ENCODE measurements at regions of chr4 and their contacts with region 1.

Region 1: GRCh38 chr4:109559983-109560686 is at the start of gene MCUB:
- DNase-seq: peak; percentile 92
- H3K4me3 Mint-ChIP-seq: peak within 1 kb of the TSS; percentile 92
- H3K27ac Mint-ChIP-seq: peak within 1 kb of the TSS; percentile 97
- H3K4me1 Mint-ChIP-seq: peaks cover 53% of the 10 kb centered on the region
- H3K27me3 Mint-ChIP-seq: no peaks in the 10 kb centered on the region
- total RNA-seq, gene MCUB: 40.6 and 46.0 TPM in 2 replicates

Region 2: GRCh38 chr4:107719922-107720722 is 1840.0 kb before region 1 on chr4 and contains the start of gene PAPSS1:
- intact Hi-C with region 1: loop called (anchors 2 kb)
- DNase-seq: peak; percentile 93
- H3K4me3 Mint-ChIP-seq: peak within 1 kb of the TSS; percentile 94
- H3K27ac Mint-ChIP-seq: peak within 1 kb of the TSS; percentile 90
- H3K4me1 Mint-ChIP-seq: peaks cover 33% of the 10 kb centered on the region
- H3K27me3 Mint-ChIP-seq: no peaks in the 10 kb centered on the region
- total RNA-seq, gene PAPSS1: 35.0 and 36.0 TPM in 2 replicates

Region 3: GRCh38 chr4:108650212-108651013 is 909.7 kb before region 1 on chr4 and contains the start of gene OSTC:
- intact Hi-C with region 1: loop called (anchors 10 kb)
- DNase-seq: peak; percentile 90
- H3K4me3 Mint-ChIP-seq: peak within 1 kb of the TSS; percentile 99
- H3K27ac Mint-ChIP-seq: peak within 1 kb of the TSS; percentile 93
- H3K4me1 Mint-ChIP-seq: peaks cover 39% of the 10 kb centered on the region
- H3K27me3 Mint-ChIP-seq: no peaks in the 10 kb centered on the region
- total RNA-seq, gene OSTC: 96.1 and 96.7 TPM in 2 replicates

Region 4: GRCh38 chr4:109588176-109588575 is 28.0 kb after region 1 on chr4:
- intact Hi-C with region 1: loop called (anchors 1 kb)
- DNase-seq: peak; percentile 22
- H3K4me3 Mint-ChIP-seq: no peak overlapping the region
- H3K27ac Mint-ChIP-seq: peak overlapping the region; percentile 1
- H3K4me1 Mint-ChIP-seq: peaks cover 57% of the 10 kb centered on the region
- H3K27me3 Mint-ChIP-seq: no peaks in the 10 kb centered on the region

Region 5: GRCh38 chr4:109729718-109730618 is 169.8 kb after region 1 on chr4 and contains the start of gene PLA2G12A:
- intact Hi-C with region 1: loop called (anchors 1 kb)
- DNase-seq: peak; percentile 68
- H3K4me3 Mint-ChIP-seq: peak within 1 kb of the TSS; percentile 84
- H3K27ac Mint-ChIP-seq: peak within 1 kb of the TSS; percentile 62
- H3K4me1 Mint-ChIP-seq: peaks cover 19% of the 10 kb centered on the region
- H3K27me3 Mint-ChIP-seq: peaks cover 2% of the 10 kb centered on the region
- total RNA-seq, gene PLA2G12A: 11.3 and 13.1 TPM in 2 replicates

Region 6: DNA sequence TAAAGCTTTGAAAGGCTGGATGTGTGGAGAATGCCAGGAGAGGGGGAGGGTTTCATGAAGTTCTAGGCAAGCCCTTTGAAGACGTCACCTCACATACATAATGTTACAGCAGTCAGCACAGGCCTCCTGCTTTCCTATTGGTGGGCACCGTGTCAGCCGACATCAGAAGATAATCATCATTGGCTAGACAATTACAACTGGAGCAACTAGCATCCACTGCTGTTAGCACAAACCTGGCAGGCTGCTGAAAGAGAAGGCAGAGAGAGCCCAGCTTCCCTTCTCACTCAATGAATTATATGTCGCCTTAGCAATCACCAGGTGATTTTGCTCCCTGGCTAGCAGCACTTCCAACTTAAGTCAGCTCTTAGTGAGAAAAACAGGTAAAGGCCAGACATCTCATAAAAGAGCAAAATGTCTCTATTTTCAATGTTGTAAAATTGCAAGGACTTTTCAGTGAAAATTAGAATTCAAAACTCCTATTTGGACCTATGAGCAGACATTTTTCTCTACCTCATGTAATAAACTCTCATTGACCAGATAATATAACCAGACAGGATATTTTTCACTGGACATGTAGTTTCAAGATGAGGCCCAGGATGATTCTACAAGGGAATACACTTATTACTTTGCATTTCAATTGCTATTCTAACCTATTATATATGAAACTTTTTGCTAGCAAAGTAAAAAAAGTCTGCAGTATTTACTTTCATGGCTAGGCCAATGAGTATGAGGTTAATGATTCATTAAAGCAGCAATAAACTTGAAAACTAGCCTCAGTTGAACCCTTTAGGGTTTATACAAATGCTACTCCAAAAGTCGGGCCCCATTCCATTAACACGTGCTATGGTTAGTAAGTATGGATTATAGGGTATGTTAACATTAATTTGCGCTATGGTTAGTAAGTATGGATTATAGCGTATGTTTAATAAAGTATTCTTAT is 634.0 kb after region 1 on chr4:
- intact Hi-C with region 1: loop called (anchors 1 kb)
- DNase-seq: peak; percentile 77
- H3K4me3 Mint-ChIP-seq: peak overlapping the region; percentile 50
- H3K27ac Mint-ChIP-seq: peak overlapping the region; percentile 85
- H3K4me1 Mint-ChIP-seq: peaks cover 52% of the 10 kb centered on the region
- H3K27me3 Mint-ChIP-seq: peaks cover 2% of the 10 kb centered on the region

Measured in activated T-helper 1 cell treated with anti-CD3 and anti-CD28 coated beads, Interleukin-12 subunit alpha, Interleukin-12 subunit beta, Interleukin-2, Interleukin-4 antibody, amounts not matched to agents 30 ng/mL and 10 ng/mL and 1 ng/mL, durations not matched to agents 14 hours and 24 hours and 36 hours (primary cell).